Activated CD4-positive, alpha-beta memory T cell treated with anti-CD3 and anti-CD28 coated beads for 36 hours (primary cell): ENCODE measurements at regions of chr19 and their contacts with region 1.

Region 1: DNA sequence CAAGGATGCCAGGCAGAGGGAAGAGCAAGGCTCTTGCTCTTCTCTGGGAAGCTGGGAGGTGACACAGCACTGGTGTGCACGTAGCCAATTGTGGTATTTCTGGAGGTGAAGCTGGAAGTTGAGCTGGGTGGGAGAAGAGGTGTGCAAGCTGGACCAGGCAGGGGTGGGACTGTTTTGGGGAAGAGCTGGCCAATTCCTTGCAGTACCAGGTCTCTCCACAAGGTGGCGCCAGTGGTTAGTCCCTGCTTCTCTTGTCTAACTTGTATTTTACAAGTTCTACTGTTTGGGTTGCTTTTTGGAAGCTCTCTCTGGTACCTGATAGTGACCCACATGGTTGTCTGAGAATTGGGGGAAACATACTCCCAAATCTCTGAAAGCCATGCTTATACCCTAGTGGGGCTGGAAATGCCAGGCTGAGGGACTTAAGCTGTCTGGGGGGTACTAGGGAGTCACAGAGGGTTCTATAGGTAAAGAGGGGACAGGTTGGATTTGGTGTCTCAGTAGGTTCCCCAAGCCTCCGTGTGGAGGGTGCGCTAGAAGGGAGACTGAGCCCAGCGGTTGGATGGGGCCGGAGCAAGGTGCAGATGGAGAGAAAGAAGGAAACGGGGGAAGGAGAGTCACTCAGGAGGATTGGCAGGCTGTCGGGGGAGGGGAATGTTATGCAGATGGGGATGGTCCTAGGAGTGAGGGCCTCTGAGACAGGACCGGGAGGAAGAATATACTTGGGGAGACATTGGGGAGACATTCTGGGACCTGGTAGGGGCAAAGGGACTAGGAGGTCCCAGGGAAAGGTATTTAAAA is 3.0 kb downstream of the HPN start:
- DNase-seq: peak; percentile 77
- H3K4me3 Mint-ChIP-seq: no peak overlapping the region
- H3K27ac Mint-ChIP-seq: peak overlapping the region; percentile 21
- H3K4me1 Mint-ChIP-seq: peaks cover 25% of the 10 kb centered on the region
- H3K27me3 Mint-ChIP-seq: peaks cover 10% of the 10 kb centered on the region

Region 2: GRCh38 chr19:34888091-34888490 is 156.4 kb before region 1 on chr19:
- CTCF ChIA-PET with region 1: no interaction called
- POLR2A ChIA-PET with region 1: no interaction called
- intact Hi-C with region 1: no loop called
- DNase-seq: no peak
- H3K4me3 Mint-ChIP-seq: no peak overlapping the region
- H3K27ac Mint-ChIP-seq: no peak overlapping the region
- H3K4me1 Mint-ChIP-seq: no peaks in the 10 kb centered on the region
- H3K27me3 Mint-ChIP-seq: no peaks in the 10 kb centered on the region

Region 3: GRCh38 chr19:34974646-34975045 is 69.9 kb before region 1 on chr19:
- CTCF ChIA-PET with region 1: interaction called, 15 read pairs
- POLR2A ChIA-PET with region 1: no interaction called
- intact Hi-C with region 1: loop called (anchors 2 kb)
- DNase-seq: no peak
- H3K4me3 Mint-ChIP-seq: no peak overlapping the region
- H3K27ac Mint-ChIP-seq: no peak overlapping the region
- H3K4me1 Mint-ChIP-seq: peaks cover 27% of the 10 kb centered on the region
- H3K27me3 Mint-ChIP-seq: no peaks in the 10 kb centered on the region

Region 4: DNA sequence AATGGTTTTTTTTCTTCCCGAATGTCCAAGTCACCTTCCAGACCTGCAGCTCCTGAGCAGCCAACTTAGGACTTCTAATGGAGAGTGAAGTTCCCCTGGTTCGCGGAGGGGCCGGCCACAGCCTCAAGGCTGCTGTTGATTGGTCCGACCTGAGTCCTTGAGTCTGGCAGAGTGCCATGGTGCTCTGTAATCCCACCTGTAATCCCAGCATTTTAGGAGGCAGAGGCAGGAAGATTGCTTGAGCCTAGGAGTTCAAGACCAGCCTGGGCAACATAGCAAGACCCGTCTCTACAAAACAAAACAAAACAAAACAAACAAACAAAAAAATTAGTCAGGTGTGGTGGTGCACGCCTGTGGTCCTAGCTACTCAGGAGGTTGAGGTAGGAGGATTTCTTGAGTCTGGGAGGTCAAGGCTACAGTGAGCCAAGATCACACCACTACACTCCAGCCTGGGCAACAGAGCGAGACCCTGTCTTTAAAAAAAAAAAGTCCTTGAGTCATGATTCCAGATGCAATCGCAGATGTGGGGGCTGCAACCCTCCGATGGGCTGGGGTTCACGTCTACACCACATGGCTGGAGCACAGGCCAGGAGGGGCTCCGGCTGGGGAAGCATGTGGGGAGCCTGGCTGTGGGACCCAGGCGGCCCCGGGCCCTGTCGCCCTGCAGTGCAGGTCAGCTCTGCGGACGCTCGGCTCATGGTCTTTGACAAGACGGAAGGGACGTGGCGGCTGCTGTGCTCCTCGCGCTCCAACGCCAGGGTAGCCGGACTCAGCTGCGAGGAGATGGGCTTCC is 14.7 kb after region 1 on chr19:
- CTCF ChIA-PET with region 1: interaction called, 22 read pairs
- POLR2A ChIA-PET with region 1: no interaction called
- intact Hi-C with region 1: no loop called
- DNase-seq: no peak
- H3K4me3 Mint-ChIP-seq: no peak overlapping the region
- H3K27ac Mint-ChIP-seq: no peak overlapping the region
- H3K4me1 Mint-ChIP-seq: peaks cover 8% of the 10 kb centered on the region
- H3K27me3 Mint-ChIP-seq: no peaks in the 10 kb centered on the region

Region 5: DNA sequence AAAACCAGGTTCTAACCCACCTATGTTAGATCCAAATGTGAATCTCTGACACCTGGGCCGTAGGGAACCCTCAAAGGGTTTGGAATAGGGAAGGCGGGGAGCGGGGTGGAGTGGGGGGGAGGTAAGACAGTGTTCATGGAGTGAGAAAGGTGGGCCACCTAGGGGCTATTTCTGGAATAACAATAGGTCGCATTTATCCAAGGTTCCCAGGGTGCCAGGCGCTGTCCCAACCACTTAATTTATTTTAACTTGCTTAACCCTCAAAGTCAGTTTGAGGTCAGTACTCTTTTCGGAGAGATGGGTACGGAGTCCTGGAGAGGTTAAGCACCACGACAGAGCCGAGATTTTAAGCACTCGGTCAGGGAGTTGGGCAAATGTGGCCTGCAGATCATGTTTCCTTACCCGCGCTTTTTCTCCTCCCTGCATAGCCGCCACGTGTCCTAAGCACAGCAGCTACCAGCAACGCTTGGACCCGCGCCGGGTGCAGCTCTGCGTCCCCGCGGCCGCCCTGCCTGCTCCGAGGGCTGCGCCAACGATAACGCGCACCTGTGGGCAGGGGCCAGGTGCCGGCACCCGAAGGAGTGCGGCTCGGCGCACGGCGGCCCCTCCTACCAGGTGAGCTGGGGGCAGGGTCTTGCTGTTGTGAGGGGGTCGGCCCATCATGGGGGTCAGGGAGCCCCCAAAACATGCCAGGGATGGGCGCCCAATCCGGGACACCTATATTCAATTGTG is 46.2 kb after region 1 on chr19:
- CTCF ChIA-PET with region 1: interaction called, 22 read pairs
- POLR2A ChIA-PET with region 1: no interaction called
- intact Hi-C with region 1: loop called (anchors 1 kb)
- DNase-seq: peak; percentile 50
- H3K4me3 Mint-ChIP-seq: no peak overlapping the region
- H3K27ac Mint-ChIP-seq: no peak overlapping the region
- H3K4me1 Mint-ChIP-seq: peaks cover 9% of the 10 kb centered on the region
- H3K27me3 Mint-ChIP-seq: peaks cover 6% of the 10 kb centered on the region

Region 6: DNA sequence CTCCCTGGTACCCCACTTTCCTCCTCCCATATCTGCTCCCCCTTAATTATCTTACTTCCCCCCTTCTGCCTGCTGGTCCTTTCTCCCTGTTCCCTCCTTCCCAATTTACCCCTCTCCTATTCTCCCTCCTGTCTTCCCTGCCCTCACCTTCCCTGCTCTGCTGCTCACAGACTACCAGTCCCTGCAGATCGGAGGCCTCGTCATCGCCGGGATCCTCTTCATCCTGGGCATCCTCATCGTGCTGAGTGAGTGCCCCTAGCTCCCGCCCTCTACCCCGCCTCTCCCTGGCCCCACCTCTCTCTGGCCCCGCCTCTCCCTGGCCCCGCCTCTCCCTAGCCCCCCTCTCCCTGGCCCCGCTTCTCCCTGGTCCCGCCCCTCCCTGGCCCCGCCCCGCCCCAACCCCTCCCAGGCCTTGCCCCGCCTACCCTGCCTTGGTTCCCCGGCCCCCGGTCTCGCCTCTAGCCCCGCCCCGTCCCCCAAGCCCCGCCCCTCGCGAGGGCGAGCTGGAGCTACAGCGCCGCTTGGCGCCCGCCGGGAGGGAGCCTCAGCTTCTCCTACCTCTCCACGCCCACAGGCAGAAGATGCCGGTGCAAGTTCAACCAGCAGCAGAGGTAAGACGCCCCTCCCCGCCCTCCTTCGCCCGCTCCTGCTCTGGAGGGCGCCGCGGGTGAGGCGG is 96.6 kb after region 1 on chr19:
- CTCF ChIA-PET with region 1: interaction called, 16 read pairs
- POLR2A ChIA-PET with region 1: no interaction called
- intact Hi-C with region 1: loop called (anchors 5 kb)
- DNase-seq: peak; percentile 99
- H3K4me3 Mint-ChIP-seq: peak overlapping the region; percentile 71
- H3K27ac Mint-ChIP-seq: no peak overlapping the region
- H3K4me1 Mint-ChIP-seq: peaks cover 30% of the 10 kb centered on the region
- H3K27me3 Mint-ChIP-seq: no peaks in the 10 kb centered on the region